GM23248 (cell line): ENCODE measurements at regions of chr12 and their contacts with region 1.

Region 1: GRCh38 chr12:40110586-40110985 is 4.7 kb upstream of the SLC2A13 start:
- DNase-seq: peak; percentile 4
- H3K4me3 ChIP-seq: no peak overlapping the region
- H3K27ac ChIP-seq: no peak overlapping the region
- H3K4me1 ChIP-seq: no peaks in the 10 kb centered on the region
- H3K27me3 ChIP-seq: no peaks in the 10 kb centered on the region

Region 2: DNA sequence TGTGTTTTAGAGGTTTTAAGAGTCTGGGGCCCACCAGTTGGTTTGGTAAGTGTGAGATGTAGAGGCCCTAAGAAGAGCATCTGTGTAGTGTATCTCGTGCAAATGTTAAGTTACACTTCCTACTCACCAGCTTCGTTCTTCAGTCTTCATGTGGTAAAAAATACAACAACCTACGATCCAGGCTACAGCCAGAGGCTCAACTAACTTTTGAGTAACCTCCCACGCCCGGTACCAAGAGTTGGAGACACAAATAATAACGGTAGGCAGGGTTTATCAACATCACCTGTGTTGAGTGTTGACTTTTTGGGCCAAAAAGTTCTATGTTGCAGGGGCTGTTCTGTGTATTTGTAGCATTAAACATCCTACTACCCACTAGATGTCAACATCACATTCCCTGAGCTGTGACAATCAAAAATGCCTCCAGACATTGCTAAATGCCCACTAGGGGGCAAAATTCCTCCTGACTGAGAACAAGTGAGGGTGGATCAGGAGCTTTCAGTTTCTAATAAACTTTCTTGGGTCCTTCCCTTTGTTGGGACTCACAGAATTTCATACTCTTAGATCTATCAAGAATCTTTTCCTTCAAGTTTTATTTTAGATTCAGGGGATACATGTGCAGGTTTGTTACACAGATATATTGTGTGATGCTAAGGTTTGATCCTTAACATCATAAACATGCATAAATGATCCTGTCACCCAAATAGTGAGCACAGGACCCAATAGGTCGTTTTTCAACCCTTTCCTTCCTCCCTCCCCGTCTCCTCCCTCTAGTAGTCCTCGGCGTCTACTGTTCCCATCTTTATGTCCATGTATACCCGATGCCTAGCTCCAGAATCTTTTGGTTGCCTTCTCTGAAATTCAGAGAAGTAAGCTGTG is 99.4 kb before region 1 on chr12:
- in situ Hi-C with region 1: loop called (anchors 5 kb)
- DNase-seq: peak; percentile 84
- H3K4me3 ChIP-seq: peak overlapping the region; percentile 55
- H3K27ac ChIP-seq: no peak overlapping the region
- H3K4me1 ChIP-seq: no peaks in the 10 kb centered on the region
- H3K27me3 ChIP-seq: no peaks in the 10 kb centered on the region